ENCODE measurements at regions of chr7 and their contacts with region 1.

Region 1: GRCh38 chr7:94458041-94458440 is 51.6 kb upstream of the CASD1 start:
- DNase-seq: no peak
- H3K4me3 ChIP-seq: no peak overlapping the region
- H3K27ac ChIP-seq: no peak overlapping the region
- H3K4me1 ChIP-seq: no peaks in the 10 kb centered on the region
- H3K27me3 ChIP-seq: no peaks in the 10 kb centered on the region
- CTCF ChIP-seq: no peak

Region 2: DNA sequence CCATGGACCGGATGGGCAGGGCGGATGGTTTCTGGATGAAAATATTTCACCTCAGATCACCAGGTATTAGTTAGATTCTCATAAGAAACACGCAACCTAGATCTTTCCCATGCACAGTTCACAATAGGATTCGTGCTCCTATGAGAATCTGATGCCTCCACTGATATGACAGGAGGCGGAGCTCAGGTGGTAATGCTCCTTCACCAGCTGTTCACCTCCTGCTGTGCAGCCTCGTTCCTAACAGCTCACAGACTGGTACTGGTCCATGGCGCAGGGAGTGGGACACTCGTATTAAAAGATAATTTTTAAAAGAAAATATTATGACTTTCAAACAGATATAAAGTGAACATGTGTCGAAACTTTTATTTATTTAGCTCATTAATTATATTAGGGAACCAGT is 45.1 kb after region 1 on chr7:
- CTCF ChIA-PET with region 1: interaction called, 12 read pairs
- POLR2A ChIA-PET with region 1: no interaction called
- intact Hi-C with region 1: no loop called
- DNase-seq: no peak
- H3K4me3 ChIP-seq: no peak overlapping the region
- H3K27ac ChIP-seq: no peak overlapping the region
- H3K4me1 ChIP-seq: no peaks in the 10 kb centered on the region
- H3K27me3 ChIP-seq: no peaks in the 10 kb centered on the region
- CTCF ChIP-seq: no peak